ENCODE measurements at regions of chr22 and their contacts with region 1.

Region 1: GRCh38 chr22:41448189-41448808 is 1.7 kb upstream of the TOB2 start:
- DNase-seq: peak; percentile 91 to 98
- H3K4me3 ChIP-seq: peak overlapping the region; percentile 94 to 98
- H3K27ac ChIP-seq: peak overlapping the region; percentile 99 to 100
- H3K4me1 ChIP-seq: peaks cover 7 to 9% of the 10 kb centered on the region in 2 donors
- H3K27me3 ChIP-seq: no peaks in the 10 kb centered on the region
- CTCF ChIP-seq: no peak

Region 2: GRCh38 chr22:41123151-41123550 is 325.1 kb before region 1 on chr22:
- intact Hi-C with region 1: no loop called
- DNase-seq: no peak
- H3K4me3 ChIP-seq: no peak overlapping the region
- H3K27ac ChIP-seq: no peak overlapping the region
- H3K4me1 ChIP-seq: no peaks in the 10 kb centered on the region
- H3K27me3 ChIP-seq: no peaks in the 10 kb centered on the region
- CTCF ChIP-seq: no peak

Region 3: GRCh38 chr22:41240377-41241132 is 207.7 kb before region 1 on chr22 and contains the start of gene CHADL:
- intact Hi-C with region 1: no loop called
- DNase-seq: no peak
- H3K4me3 ChIP-seq: no peak within 1 kb of the TSS
- H3K27ac ChIP-seq: no peak within 1 kb of the TSS
- H3K4me1 ChIP-seq: peaks cover 4 to 5% of the 10 kb centered on the region in 2 donors
- H3K27me3 ChIP-seq: no peaks in the 10 kb centered on the region
- CTCF ChIP-seq: no peak
- total RNA-seq, gene CHADL: not detected

Region 4: DNA sequence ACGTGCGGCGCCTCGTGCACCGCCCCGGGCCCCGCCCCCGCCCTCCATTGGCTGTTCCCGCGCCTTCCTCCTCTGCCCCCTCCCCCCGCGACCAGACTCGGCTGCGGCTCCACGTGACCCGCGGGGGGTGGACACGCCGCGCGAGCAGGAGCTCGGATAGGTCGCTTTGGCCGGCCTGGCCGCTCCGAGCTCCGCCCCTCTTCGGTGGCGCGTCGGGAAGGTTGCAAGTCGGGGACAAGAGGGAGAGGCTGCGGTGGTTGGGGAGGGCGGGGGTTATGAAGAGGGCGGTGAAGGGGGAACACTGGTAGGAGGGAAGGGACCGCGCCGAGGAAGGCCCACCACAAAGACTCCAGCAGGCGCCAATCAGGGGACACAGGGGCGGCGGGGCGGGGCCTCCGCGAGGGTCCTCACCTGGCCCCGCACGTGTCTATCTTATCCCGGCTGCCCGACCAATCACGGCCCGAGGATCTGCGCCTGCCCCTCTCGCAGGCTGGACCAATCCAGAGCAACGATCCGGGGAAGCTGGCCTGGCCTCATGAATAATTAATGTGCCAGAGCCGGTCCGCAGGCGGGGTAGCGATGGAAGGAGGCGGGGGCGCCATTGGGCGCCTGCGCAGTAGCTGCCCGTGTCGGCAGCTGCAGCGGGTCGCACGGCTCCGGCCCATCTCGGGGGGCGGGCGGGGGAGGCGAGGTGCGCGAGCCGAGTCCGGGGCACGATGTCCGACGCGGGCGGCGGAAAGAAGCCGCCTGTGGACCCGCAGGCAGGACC is 66.8 kb before region 1 on chr22 and contains the start of gene TEF:
- intact Hi-C with region 1: loop called (anchors 1 kb)
- DNase-seq: peak; percentile 97 to 99
- H3K4me3 ChIP-seq: peak within 1 kb of the TSS; percentile 79 to 87
- H3K27ac ChIP-seq: peak within 1 kb of the TSS; percentile 93 to 96
- H3K4me1 ChIP-seq: peaks cover 3 to 19% of the 10 kb centered on the region in 2 donors
- H3K27me3 ChIP-seq: no peaks in the 10 kb centered on the region
- CTCF ChIP-seq: no peak
- total RNA-seq, gene TEF: 20.2 TPM

Region 5: DNA sequence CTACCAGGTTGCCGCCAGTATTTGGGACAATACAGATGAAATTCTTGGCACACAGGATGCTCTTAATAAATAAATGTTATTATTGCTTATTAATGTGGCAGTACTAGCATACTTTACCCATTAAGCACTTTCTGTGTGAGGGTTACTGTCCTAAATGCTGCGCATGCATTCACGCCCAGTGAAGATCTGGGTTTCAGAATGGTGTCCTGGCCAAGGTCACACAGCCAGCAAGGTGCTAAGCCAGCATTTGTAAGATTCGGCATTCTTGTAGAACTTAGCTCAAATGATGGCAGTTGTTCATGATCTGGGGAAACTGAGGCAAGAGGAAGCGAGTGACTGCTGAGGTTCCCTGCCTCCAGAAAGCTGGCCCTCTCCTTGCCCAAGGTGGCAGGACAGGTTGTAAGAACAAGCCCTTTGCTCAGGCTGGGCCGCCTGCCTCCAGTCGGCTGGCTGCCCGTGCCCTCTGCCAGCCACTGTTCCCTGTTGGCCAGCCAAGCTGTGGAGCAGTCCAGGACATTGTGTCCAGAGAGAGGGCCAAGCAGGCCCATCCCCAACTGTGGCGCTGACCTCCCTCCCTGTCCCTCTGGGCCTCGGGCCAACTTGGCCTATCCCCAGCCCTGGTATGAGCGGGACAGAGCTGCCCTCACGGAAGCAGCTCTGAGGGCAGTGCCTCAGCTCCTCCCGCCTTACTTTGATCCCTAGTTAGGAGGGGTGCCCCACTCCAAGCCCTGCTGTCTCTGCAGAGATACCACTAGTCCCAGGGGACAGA is 30.5 kb before region 1 on chr22:
- intact Hi-C with region 1: loop called (anchors 1 kb)
- DNase-seq: peak; percentile 85 to 98
- H3K4me3 ChIP-seq: peak overlapping the region; percentile 25 to 32
- H3K27ac ChIP-seq: peak overlapping the region; percentile 96 to 99
- H3K4me1 ChIP-seq: peaks cover 8 to 34% of the 10 kb centered on the region in 2 donors
- H3K27me3 ChIP-seq: no peaks in the 10 kb centered on the region
- CTCF ChIP-seq: peak in 1 of 3 experiments; percentile 6

Region 6: GRCh38 chr22:41479671-41480396 is 31.5 kb after region 1 on chr22:
- intact Hi-C with region 1: loop called (anchors 5 kb)
- DNase-seq: peak in 1 of 2 donors; percentile 68
- H3K4me3 ChIP-seq: no peak overlapping the region
- H3K27ac ChIP-seq: peak overlapping the region; percentile 76 to 85
- H3K4me1 ChIP-seq: peaks cover 25 to 47% of the 10 kb centered on the region in 2 donors
- H3K27me3 ChIP-seq: no peaks in the 10 kb centered on the region
- CTCF ChIP-seq: no peak

Region 7: GRCh38 chr22:41517172-41518047 is 69.1 kb after region 1 on chr22:
- intact Hi-C with region 1: loop called (anchors 2 kb)
- DNase-seq: peak in 1 of 2 donors; percentile 89
- H3K4me3 ChIP-seq: no peak overlapping the region
- H3K27ac ChIP-seq: peak overlapping the region; percentile 27 to 44
- H3K4me1 ChIP-seq: peaks cover 0 to 12% of the 10 kb centered on the region in 2 donors
- H3K27me3 ChIP-seq: no peaks in the 10 kb centered on the region
- CTCF ChIP-seq: peak; percentile 82 to 90 (median 89)

Measured in ascending aorta (tissue), 2 donors.